ENCODE measurements at regions of chr12 and their contacts with region 1.

Region 1: GRCh38 chr12:123089631-123090353 is 61.1 kb downstream of the PITPNM2 start:
- DNase-seq: no peak
- ATAC-seq: no peak
- H3K4me3 ChIP-seq: no peak overlapping the region
- H3K27ac ChIP-seq: peak overlapping the region in 6 of 10 donors; percentile 15 to 91 (median 54)
- H3K4me1 ChIP-seq: peaks cover 9 to 84% (median 76%) of the 10 kb centered on the region in 9 donors
- H3K27me3 ChIP-seq: no peaks in the 10 kb centered on the region
- CTCF ChIP-seq: no peak

Region 2: DNA sequence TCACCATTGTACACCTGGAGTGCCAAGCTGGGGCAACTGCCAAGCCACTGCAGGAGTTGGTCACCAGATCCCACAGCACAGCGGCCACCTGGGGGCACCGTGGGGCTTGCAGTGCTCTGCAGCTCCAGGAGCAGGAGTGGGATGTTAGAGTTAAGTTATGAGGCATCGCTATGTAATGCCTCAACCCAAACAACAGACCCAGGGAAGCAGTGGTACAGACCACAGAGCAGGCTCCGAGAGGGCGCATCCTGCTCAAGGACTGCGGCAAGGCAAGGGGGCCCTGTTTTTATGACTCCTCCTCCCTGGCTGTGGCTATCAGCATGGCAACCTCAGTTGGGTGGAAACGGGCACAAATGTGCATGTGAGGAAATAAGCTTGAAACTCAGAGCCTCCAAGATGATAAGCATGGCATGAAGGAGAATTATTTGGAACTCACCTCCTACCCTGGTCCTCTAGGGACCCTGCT is 46.2 kb before region 1 on chr12:
- intact Hi-C with region 1: loop called in 1 of 10 experiments (anchors 10 kb)
- DNase-seq: peak; percentile 82 to 85
- ATAC-seq: peak; percentile 84 to 96 (median 91)
- H3K4me3 ChIP-seq: no peak overlapping the region
- H3K27ac ChIP-seq: peak overlapping the region in 7 of 10 donors; percentile 4 to 51 (median 39)
- H3K4me1 ChIP-seq: peaks cover 14 to 61% (median 42%) of the 10 kb centered on the region in 9 donors
- H3K27me3 ChIP-seq: no peaks in the 10 kb centered on the region
- CTCF ChIP-seq: peak; percentile 52 to 88 (median 72)